ENCODE measurements at regions of chr16 and their contacts with region 1.

Region 1: GRCh38 chr16:27972500-27972899 is 91.0 kb downstream of the GSG1L start:
- DNase-seq: peak; percentile 39 to 54 (median 46)
- H3K4me3 ChIP-seq: no peak overlapping the region
- H3K27ac ChIP-seq: no peak overlapping the region
- H3K4me1 ChIP-seq: no peaks in the 10 kb centered on the region
- H3K27me3 ChIP-seq: peaks cover 0 to 3% (median 0%) of the 10 kb centered on the region in 5 experiments

Region 2: GRCh38 chr16:27867122-27868110 is 105.1 kb before region 1 on chr16:
- CTCF ChIA-PET with region 1: no interaction called
- POLR2A ChIA-PET with region 1: no interaction called
- DNase-seq: peak; percentile 61 to 69 (median 63)
- H3K4me3 ChIP-seq: no peak overlapping the region
- H3K27ac ChIP-seq: no peak overlapping the region
- H3K4me1 ChIP-seq: peaks cover 0 to 2% (median 0%) of the 10 kb centered on the region in 4 experiments
- H3K27me3 ChIP-seq: no peaks in the 10 kb centered on the region

Region 3: GRCh38 chr16:28067604-28068379 is 95.3 kb after region 1 on chr16:
- CTCF ChIA-PET with region 1: interaction called, 44 read pairs
- POLR2A ChIA-PET with region 1: no interaction called
- DNase-seq: no peak
- H3K4me3 ChIP-seq: no peak overlapping the region
- H3K27ac ChIP-seq: no peak overlapping the region
- H3K4me1 ChIP-seq: peaks cover 0 to 10% (median 6%) of the 10 kb centered on the region in 4 experiments
- H3K27me3 ChIP-seq: peaks cover 0 to 34% (median 16%) of the 10 kb centered on the region in 5 experiments

Measured in common myeloid progenitor, CD34-positive (primary cell).